Naive thymus-derived CD8-positive, alpha-beta T cell (primary cell): ENCODE measurements at regions of chr11 and their contacts with region 1.

Region 1: DNA sequence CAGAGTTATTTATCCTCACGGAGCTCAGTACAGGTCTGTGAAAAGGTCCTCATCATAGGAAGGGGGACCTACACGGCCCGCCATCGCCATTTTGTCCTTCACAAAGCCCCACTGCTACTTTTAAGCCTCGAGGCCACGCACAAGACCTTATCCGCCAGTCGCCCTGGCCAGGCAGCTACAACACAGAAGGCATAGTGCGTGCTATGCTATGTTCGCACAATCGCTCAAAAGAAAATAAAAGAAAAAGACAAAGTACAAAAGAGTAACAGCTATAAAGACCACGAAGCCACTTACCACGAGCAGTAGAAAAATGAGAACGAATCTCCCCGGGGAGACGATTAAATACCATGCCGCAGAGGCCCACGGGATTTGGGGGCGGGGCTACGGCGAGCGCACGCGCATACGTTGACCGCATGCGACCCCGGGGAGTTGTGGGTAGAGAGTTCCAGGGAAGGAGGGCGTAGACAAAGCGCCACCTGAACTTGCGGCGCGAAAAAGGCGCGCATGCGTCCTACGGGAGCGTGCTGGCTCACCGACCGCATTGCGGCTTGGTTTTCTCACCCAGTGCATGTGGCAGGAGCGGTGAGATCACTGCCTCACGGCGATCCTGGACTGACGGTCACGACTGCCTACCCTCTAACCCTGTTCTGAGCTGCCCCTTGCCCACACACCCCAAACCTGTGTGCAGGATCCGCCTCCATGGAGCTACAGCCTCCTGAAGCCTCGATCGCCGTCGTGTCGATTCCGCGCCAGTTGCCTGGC is 16.4 kb upstream of the WDR74 start:
- DNase-seq: peak; percentile 94 to 99 (median 98)
- ATAC-seq: peak; percentile 87 to 90
- H3K4me3 Mint-ChIP-seq: peak overlapping the region; percentile 95 to 99 (median 98)
- H3K27ac Mint-ChIP-seq: peak overlapping the region; percentile 88 to 99 (median 98)
- H3K4me1 Mint-ChIP-seq: peaks cover 33 to 54% (median 52%) of the 10 kb centered on the region in 4 donors
- H3K27me3 Mint-ChIP-seq: peaks cover 0 to 4% (median 0%) of the 10 kb centered on the region in 5 donors

Region 2: GRCh38 chr11:62771144-62772021 is 84.4 kb before region 1 on chr11 and contains the start of gene TAF6L:
- POLR2A ChIA-PET with region 1: interaction called, 25 read pairs
- DNase-seq: peak; percentile 78 to 93 (median 83)
- ATAC-seq: peak; percentile 82 to 94
- H3K4me3 Mint-ChIP-seq: peak within 1 kb of the TSS; percentile 84 to 99 (median 96)
- H3K27ac Mint-ChIP-seq: peak within 1 kb of the TSS; percentile 89 to 98 (median 96)
- H3K4me1 Mint-ChIP-seq: peaks cover 15 to 34% (median 32%) of the 10 kb centered on the region in 4 donors
- H3K27me3 Mint-ChIP-seq: no peaks in the 10 kb centered on the region
- polyA plus RNA-seq, gene TAF6L: 8.7 to 10.8 (median 8.9) TPM

Region 3: DNA sequence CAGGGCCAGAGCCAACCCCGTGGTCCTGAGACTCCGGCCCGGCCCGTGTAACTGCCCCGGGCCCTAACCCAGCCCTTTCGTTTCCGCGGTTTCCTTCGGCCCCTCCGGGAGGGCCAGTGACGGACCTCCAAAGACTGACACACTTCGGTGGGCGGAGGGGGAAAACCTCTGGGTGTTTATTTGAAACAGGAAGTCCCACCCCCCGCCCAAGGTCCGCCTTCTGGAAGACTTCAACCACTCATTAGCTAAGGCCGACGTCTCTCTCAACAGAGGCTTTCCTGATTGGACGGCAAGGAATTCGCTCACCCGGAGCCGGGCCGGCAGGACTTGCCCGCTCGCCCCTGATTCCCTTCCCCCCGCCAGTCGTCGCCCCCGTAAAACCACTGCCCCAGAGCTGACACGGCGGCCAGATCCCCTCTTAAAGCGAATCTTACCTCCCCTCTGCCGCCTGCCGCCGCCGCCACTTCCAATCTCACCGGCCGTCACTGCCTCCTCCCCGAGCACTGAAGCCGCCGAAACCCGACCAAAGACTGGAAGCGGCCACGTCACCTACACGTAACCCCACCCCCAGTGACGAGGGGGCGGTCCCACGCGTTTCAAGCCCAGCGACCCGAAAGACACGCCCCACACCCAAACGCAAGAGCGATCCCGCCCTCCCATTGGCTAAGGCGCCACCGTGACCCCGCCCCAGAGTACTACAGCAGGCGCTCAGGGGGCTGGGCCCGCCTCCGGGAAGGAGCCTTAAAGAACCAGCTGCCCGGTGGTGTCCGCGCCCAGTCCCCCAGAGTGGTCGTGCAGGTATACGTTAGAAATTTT is 24.0 kb before region 1 on chr11 and contains the start of gene STX5:
- POLR2A ChIA-PET with region 1: interaction called, 65 read pairs
- DNase-seq: peak; percentile 99 to 100 (median 100)
- ATAC-seq: peak; percentile 89 to 90
- H3K4me3 Mint-ChIP-seq: peak within 1 kb of the TSS; percentile 93 to 99 (median 98)
- H3K27ac Mint-ChIP-seq: peak within 1 kb of the TSS; percentile 91 to 100 (median 100)
- H3K4me1 Mint-ChIP-seq: peaks cover 25 to 56% (median 48%) of the 10 kb centered on the region in 4 donors
- H3K27me3 Mint-ChIP-seq: no peaks in the 10 kb centered on the region
- polyA plus RNA-seq, gene STX5: 25.4 to 30.4 (median 26.2) TPM

Region 4: GRCh38 chr11:62905927-62906531 is 50.3 kb after region 1 on chr11:
- POLR2A ChIA-PET with region 1: no interaction called
- DNase-seq: peak; percentile 57 to 86 (median 74)
- ATAC-seq: peak; percentile 64 to 95
- H3K4me3 Mint-ChIP-seq: no peak overlapping the region
- H3K27ac Mint-ChIP-seq: no peak overlapping the region
- H3K4me1 Mint-ChIP-seq: peaks cover 3 to 6% (median 4%) of the 10 kb centered on the region in 4 donors
- H3K27me3 Mint-ChIP-seq: peaks cover 2 to 24% (median 14%) of the 10 kb centered on the region in 5 donors

Region 5: DNA sequence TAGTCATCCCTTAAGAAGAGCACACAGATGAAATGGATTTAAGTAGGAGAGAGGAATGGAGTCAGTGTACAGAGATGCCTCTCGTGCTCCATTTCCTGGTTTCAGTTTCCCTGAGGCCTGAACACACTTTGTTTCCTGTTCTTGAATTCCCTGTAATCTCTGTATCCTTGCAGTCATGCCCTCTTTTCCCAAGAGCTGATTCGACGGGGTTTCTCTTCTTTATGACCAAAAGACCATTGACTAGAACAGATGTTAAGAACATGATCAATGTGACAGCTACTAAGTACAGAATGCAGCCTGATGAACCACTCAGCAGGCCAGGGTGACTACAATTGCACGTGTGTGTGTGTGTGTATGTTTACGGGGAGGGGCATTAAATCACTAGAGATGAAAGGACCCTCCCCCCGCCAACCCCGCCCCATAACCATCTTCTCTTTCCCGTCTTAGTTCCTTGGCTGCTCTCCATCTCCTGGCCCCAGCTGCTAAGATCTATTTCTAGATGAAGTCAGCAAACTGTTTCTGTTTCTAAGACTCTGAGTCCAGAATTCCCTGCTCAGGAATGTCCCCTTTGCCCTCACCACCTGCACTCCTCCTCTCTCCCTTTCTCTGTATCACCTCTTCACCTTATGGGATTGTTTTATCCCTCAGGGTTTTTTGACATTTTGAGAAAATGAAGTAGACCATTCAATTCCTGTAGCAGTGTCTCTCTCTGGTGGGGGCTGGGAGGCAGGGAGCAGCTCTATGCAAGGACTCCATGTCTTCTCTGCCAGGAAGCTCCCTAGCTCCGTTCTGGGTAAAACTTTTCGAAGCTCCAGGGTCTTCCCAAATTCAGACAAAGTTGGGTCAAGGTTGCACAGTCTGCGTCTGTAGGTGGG is 103.0 kb after region 1 on chr11:
- POLR2A ChIA-PET with region 1: no interaction called
- DNase-seq: no peak
- ATAC-seq: no peak
- H3K4me3 Mint-ChIP-seq: no peak overlapping the region
- H3K27ac Mint-ChIP-seq: no peak overlapping the region
- H3K4me1 Mint-ChIP-seq: peaks cover 0 to 4% (median 0%) of the 10 kb centered on the region in 4 donors
- H3K27me3 Mint-ChIP-seq: peaks cover 3 to 10% (median 7%) of the 10 kb centered on the region in 5 donors

Region 6: DNA sequence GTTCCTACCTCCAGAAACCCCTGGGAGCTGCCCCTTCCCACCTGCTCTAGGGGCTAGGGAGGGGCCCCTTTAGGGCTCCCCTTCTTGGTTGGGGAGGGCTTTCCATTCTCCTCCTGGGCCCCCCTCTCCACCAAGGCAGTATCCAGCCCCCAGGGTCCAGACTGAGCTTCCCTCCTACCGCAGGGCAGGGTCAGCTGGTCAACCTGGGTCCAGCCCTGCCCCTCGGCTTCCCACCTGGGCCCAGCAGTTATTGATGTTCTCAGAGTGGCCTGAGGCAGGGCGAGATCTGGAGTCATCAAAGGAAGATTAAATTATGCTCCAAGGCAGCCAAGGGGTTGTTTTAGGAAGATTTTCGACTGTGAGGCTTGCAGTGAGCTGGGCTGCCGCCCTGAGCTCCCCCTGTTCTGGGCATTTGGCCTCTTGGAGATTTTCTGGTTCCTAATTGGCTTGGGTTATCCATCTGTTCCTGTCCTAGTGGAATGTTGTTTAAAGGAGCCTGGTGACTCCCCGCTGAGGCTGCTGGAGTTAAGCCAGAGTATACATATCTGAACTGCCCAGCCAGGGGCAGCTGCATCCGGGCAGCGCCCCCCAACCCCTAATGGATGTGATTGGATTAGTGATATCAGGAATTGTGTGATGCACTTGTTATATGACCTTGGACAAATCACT is 161.7 kb after region 1 on chr11:
- POLR2A ChIA-PET with region 1: no interaction called
- DNase-seq: no peak
- ATAC-seq: no peak
- H3K4me3 Mint-ChIP-seq: no peak overlapping the region
- H3K27ac Mint-ChIP-seq: no peak overlapping the region
- H3K4me1 Mint-ChIP-seq: no peaks in the 10 kb centered on the region
- H3K27me3 Mint-ChIP-seq: peaks cover 5 to 44% (median 15%) of the 10 kb centered on the region in 5 donors

Region 7: GRCh38 chr11:63459586-63459985 is 603.8 kb after region 1 on chr11:
- POLR2A ChIA-PET with region 1: no interaction called
- DNase-seq: no peak
- ATAC-seq: no peak
- H3K4me3 Mint-ChIP-seq: no peak overlapping the region
- H3K27ac Mint-ChIP-seq: no peak overlapping the region
- H3K4me1 Mint-ChIP-seq: no peaks in the 10 kb centered on the region
- H3K27me3 Mint-ChIP-seq: peaks cover 0 to 12% (median 0%) of the 10 kb centered on the region in 5 donors